ENCODE measurements at regions of chr14 and their contacts with region 1.

Region 1: GRCh38 chr14:88551094-88551870 is 3.5 kb downstream of the PTPN21 start:
- DNase-seq: peak; percentile 82
- H3K4me3 ChIP-seq: peak overlapping the region; percentile 75 to 100 (median 82)
- H3K27ac ChIP-seq: peak overlapping the region; percentile 50
- H3K4me1 ChIP-seq: peaks cover 14% of the 10 kb centered on the region
- H3K27me3 ChIP-seq: no peaks in the 10 kb centered on the region
- CTCF ChIP-seq: peak in 1 of 2 donors; percentile 46

Region 2: GRCh38 chr14:87944987-87945604 is 606.2 kb before region 1 on chr14:
- CTCF ChIA-PET with region 1: no interaction called
- dilution Hi-C with region 1: no loop called
- in situ Hi-C with region 1: no loop called
- intact Hi-C with region 1: loop called (anchors 5 kb)
- DNase-seq: peak; percentile 23
- H3K4me3 ChIP-seq: no peak overlapping the region
- H3K27ac ChIP-seq: no peak overlapping the region
- H3K4me1 ChIP-seq: no peaks in the 10 kb centered on the region
- H3K27me3 ChIP-seq: no peaks in the 10 kb centered on the region
- CTCF ChIP-seq: peak; percentile 44 to 54

Region 3: GRCh38 chr14:88385345-88386101 is 165.8 kb before region 1 on chr14 and contains the start of gene SPATA7:
- CTCF ChIA-PET with region 1: no interaction called
- dilution Hi-C with region 1: no loop called
- in situ Hi-C with region 1: no loop called
- intact Hi-C with region 1: loop called (anchors 5 kb)
- DNase-seq: peak; percentile 81
- H3K4me3 ChIP-seq: peak within 1 kb of the TSS; percentile 83 to 93 (median 86)
- H3K27ac ChIP-seq: peak within 1 kb of the TSS; percentile 70
- H3K4me1 ChIP-seq: peaks cover 11% of the 10 kb centered on the region
- H3K27me3 ChIP-seq: peaks cover 2% of the 10 kb centered on the region
- CTCF ChIP-seq: no peak
- total RNA-seq, gene SPATA7: 7.8 to 16.0 TPM

Region 4: GRCh38 chr14:88975043-88975830 is 424.0 kb after region 1 on chr14:
- CTCF ChIA-PET with region 1: no interaction called
- dilution Hi-C with region 1: no loop called
- in situ Hi-C with region 1: no loop called
- intact Hi-C with region 1: loop called (anchors 5 kb)
- DNase-seq: no peak
- H3K4me3 ChIP-seq: no peak overlapping the region
- H3K27ac ChIP-seq: no peak overlapping the region
- H3K4me1 ChIP-seq: no peaks in the 10 kb centered on the region
- H3K27me3 ChIP-seq: no peaks in the 10 kb centered on the region
- CTCF ChIP-seq: no peak

Region 5: GRCh38 chr14:89954070-89955028 is 1403.1 kb after region 1 on chr14 and contains the start of gene EFCAB11:
- CTCF ChIA-PET with region 1: no interaction called
- dilution Hi-C with region 1: no loop called
- in situ Hi-C with region 1: no loop called
- intact Hi-C with region 1: loop called (anchors 5 kb)
- DNase-seq: peak; percentile 99
- H3K4me3 ChIP-seq: peak within 1 kb of the TSS; percentile 46 to 92 (median 69)
- H3K27ac ChIP-seq: peak within 1 kb of the TSS; percentile 88
- H3K4me1 ChIP-seq: peaks cover 25% of the 10 kb centered on the region
- H3K27me3 ChIP-seq: no peaks in the 10 kb centered on the region
- CTCF ChIP-seq: peak; percentile 18 to 30
- total RNA-seq, gene EFCAB11: 4.0 to 13.8 TPM